HepG2 (cell line): ENCODE measurements at regions of chr9 and their contacts with region 1.

Region 1: DNA sequence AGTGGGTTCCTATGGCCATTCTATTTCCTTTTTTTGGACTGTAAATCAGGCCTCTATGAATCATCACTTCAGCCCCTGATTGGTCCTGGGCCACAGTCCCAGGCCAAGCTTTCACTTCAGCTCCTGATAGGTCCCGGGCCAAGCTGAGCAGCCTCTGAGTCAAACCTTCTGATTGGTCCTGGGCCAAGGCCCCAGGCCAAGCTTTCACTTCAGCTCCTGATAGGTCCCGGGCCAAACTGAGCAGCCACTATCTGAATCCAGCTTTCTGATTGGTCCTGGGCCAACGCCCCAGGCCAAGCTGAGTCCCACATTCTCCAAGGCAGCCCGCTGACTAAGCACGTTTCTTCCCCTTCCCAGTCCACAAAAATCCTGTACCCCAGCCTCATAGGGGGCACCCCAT is 1972.9 kb upstream of the ACO1 start:
- DNase-seq: no peak
- ATAC-seq: no peak
- H3K4me3 ChIP-seq: no peak overlapping the region
- H3K27ac ChIP-seq: no peak overlapping the region
- H3K4me1 ChIP-seq: no peaks in the 10 kb centered on the region
- H3K27me3 ChIP-seq: no peaks in the 10 kb centered on the region
- CTCF ChIP-seq: no peak
- EP300 ChIP-seq: no peak
- POLR2A ChIP-seq: no peak
- RAD21 ChIP-seq: no peak

Region 2: DNA sequence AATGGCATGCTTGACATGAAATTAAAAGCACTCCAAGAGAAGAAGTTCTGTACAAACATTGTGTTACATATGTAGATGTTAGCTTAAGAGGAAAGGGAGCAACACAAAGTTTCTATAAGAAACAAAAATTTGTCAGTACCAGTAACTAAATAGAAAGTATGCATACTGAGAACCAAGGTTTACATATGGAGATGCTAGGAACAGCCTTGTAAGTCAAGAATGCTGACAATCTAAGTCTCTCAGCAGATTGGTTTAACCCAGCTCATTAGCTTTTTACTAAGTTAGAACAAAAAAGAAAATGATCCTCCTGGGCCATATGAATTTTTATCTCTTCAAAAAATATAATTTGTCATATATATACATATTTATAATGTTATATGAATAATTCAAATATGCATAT is 49.2 kb before region 1 on chr9:
- CTCF ChIA-PET with region 1: no interaction called
- POLR2A ChIA-PET with region 1: no interaction called
- in situ Hi-C with region 1: no loop called
- intact Hi-C with region 1: loop called (anchors 1 kb)
- DNase-seq: no peak
- ATAC-seq: no peak
- H3K4me3 ChIP-seq: no peak overlapping the region
- H3K27ac ChIP-seq: no peak overlapping the region
- H3K4me1 ChIP-seq: no peaks in the 10 kb centered on the region
- H3K27me3 ChIP-seq: no peaks in the 10 kb centered on the region
- CTCF ChIP-seq: no peak
- EP300 ChIP-seq: no peak
- POLR2A ChIP-seq: no peak
- RAD21 ChIP-seq: no peak

Region 3: GRCh38 chr9:30744871-30745270 is 333.3 kb after region 1 on chr9:
- CTCF ChIA-PET with region 1: no interaction called
- POLR2A ChIA-PET with region 1: no interaction called
- in situ Hi-C with region 1: no loop called
- intact Hi-C with region 1: no loop called
- DNase-seq: no peak
- ATAC-seq: no peak
- H3K4me3 ChIP-seq: no peak overlapping the region
- H3K27ac ChIP-seq: no peak overlapping the region
- H3K4me1 ChIP-seq: no peaks in the 10 kb centered on the region
- H3K27me3 ChIP-seq: no peaks in the 10 kb centered on the region
- CTCF ChIP-seq: no peak
- EP300 ChIP-seq: no peak
- POLR2A ChIP-seq: no peak
- RAD21 ChIP-seq: no peak